ENCODE measurements at regions of chr7 and their contacts with region 1.

Region 1: GRCh38 chr7:132394283-132395198 is 181.7 kb downstream of the PLXNA4 start:
- DNase-seq: peak; percentile 60
- ATAC-seq: peak; percentile 84
- H3K4me3 Mint-ChIP-seq: no peak overlapping the region
- H3K27ac Mint-ChIP-seq: no peak overlapping the region
- H3K4me1 Mint-ChIP-seq: peaks cover 11% of the 10 kb centered on the region
- H3K27me3 Mint-ChIP-seq: peaks cover 12% of the 10 kb centered on the region

Region 2: GRCh38 chr7:132249614-132249972 is 144.9 kb before region 1 on chr7:
- CTCF ChIA-PET with region 1: no interaction called
- DNase-seq: no peak
- ATAC-seq: no peak
- H3K4me3 Mint-ChIP-seq: no peak overlapping the region
- H3K27ac Mint-ChIP-seq: no peak overlapping the region
- H3K4me1 Mint-ChIP-seq: no peaks in the 10 kb centered on the region
- H3K27me3 Mint-ChIP-seq: peaks cover 18% of the 10 kb centered on the region

Region 3: DNA sequence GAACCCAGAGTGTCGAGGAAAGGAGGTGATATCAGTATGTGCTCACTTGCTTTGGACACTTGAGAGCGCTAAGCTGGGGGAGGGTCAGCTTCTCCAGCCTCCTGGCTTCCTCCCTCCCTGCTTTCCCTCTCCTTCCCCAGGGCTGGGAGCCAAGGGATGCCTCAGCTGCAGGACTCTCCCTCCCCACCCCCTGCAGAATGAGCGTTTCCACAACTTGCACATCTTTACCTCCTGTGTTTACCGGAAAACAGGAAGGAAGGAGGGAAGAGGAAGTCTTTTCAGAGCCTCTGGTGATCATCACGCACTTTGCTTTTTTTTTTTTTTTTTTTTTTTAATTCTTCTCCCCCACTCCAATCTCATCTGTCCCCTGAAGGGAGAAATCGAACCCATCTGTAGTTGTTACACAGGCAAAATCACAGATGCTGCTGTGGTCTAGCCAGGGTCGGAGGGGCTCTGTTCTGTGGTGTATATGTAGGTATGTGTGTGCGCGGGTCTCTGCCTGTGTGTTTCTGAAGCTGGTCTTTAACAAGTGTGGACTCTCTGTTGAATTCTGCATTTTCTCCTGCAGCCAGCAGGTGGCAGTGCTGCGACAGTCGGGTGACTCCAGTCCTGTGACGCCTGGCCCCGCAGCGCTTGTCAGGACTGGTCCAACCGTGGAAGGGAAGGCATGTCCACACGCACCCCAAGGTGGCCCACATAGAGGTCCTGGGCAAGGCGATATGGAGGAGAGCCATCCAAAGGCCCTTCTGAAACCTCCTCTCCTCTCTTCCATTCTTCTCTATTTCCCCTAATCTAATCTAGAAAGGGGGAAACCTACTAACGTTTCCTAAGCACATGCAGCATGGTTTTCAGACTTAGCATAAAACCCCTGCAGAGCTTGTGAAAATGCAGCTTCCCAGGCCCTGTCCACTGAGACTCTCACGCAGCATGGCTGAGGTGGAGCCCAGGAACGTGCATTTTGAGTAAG is 75.9 kb before region 1 on chr7:
- CTCF ChIA-PET with region 1: interaction called, 13 read pairs
- DNase-seq: peak; percentile 85
- ATAC-seq: peak; percentile 97
- H3K4me3 Mint-ChIP-seq: no peak overlapping the region
- H3K27ac Mint-ChIP-seq: no peak overlapping the region
- H3K4me1 Mint-ChIP-seq: peaks cover 20% of the 10 kb centered on the region
- H3K27me3 Mint-ChIP-seq: peaks cover 54% of the 10 kb centered on the region

Region 4: GRCh38 chr7:132380059-132380458 is 14.5 kb before region 1 on chr7:
- CTCF ChIA-PET with region 1: no interaction called
- DNase-seq: no peak
- ATAC-seq: no peak
- H3K4me3 Mint-ChIP-seq: no peak overlapping the region
- H3K27ac Mint-ChIP-seq: no peak overlapping the region
- H3K4me1 Mint-ChIP-seq: no peaks in the 10 kb centered on the region
- H3K27me3 Mint-ChIP-seq: peaks cover 37% of the 10 kb centered on the region

Region 5: GRCh38 chr7:132437730-132438129 is 43.2 kb after region 1 on chr7:
- CTCF ChIA-PET with region 1: interaction called, 10 read pairs
- DNase-seq: peak; percentile 81
- ATAC-seq: peak; percentile 67
- H3K4me3 Mint-ChIP-seq: peak overlapping the region; percentile 13
- H3K27ac Mint-ChIP-seq: peak overlapping the region; percentile 71
- H3K4me1 Mint-ChIP-seq: peaks cover 76% of the 10 kb centered on the region
- H3K27me3 Mint-ChIP-seq: peaks cover 8% of the 10 kb centered on the region

Region 6: GRCh38 chr7:132451161-132451560 is 56.6 kb after region 1 on chr7:
- CTCF ChIA-PET with region 1: interaction called, 12 read pairs
- DNase-seq: peak; percentile 85
- ATAC-seq: peak; percentile 79
- H3K4me3 Mint-ChIP-seq: peak overlapping the region; percentile 2
- H3K27ac Mint-ChIP-seq: peak overlapping the region; percentile 79
- H3K4me1 Mint-ChIP-seq: peaks cover 84% of the 10 kb centered on the region
- H3K27me3 Mint-ChIP-seq: no peaks in the 10 kb centered on the region

Region 7: GRCh38 chr7:132557489-132558044 is 163.0 kb after region 1 on chr7:
- CTCF ChIA-PET with region 1: interaction called, 26 read pairs
- DNase-seq: no peak
- ATAC-seq: no peak
- H3K4me3 Mint-ChIP-seq: no peak overlapping the region
- H3K27ac Mint-ChIP-seq: no peak overlapping the region
- H3K4me1 Mint-ChIP-seq: peaks cover 15% of the 10 kb centered on the region
- H3K27me3 Mint-ChIP-seq: peaks cover 35% of the 10 kb centered on the region

Region 8: GRCh38 chr7:132568962-132569361 is 174.4 kb after region 1 on chr7:
- CTCF ChIA-PET with region 1: interaction called, 216 read pairs
- DNase-seq: no peak
- ATAC-seq: no peak
- H3K4me3 Mint-ChIP-seq: no peak overlapping the region
- H3K27ac Mint-ChIP-seq: no peak overlapping the region
- H3K4me1 Mint-ChIP-seq: no peaks in the 10 kb centered on the region
- H3K27me3 Mint-ChIP-seq: peaks cover 83% of the 10 kb centered on the region